Activated CD4-positive, alpha-beta memory T cell treated with anti-CD3 and anti-CD28 coated beads for 36 hours (primary cell): ENCODE measurements at regions of chr15 and their contacts with region 1.

Region 1: DNA sequence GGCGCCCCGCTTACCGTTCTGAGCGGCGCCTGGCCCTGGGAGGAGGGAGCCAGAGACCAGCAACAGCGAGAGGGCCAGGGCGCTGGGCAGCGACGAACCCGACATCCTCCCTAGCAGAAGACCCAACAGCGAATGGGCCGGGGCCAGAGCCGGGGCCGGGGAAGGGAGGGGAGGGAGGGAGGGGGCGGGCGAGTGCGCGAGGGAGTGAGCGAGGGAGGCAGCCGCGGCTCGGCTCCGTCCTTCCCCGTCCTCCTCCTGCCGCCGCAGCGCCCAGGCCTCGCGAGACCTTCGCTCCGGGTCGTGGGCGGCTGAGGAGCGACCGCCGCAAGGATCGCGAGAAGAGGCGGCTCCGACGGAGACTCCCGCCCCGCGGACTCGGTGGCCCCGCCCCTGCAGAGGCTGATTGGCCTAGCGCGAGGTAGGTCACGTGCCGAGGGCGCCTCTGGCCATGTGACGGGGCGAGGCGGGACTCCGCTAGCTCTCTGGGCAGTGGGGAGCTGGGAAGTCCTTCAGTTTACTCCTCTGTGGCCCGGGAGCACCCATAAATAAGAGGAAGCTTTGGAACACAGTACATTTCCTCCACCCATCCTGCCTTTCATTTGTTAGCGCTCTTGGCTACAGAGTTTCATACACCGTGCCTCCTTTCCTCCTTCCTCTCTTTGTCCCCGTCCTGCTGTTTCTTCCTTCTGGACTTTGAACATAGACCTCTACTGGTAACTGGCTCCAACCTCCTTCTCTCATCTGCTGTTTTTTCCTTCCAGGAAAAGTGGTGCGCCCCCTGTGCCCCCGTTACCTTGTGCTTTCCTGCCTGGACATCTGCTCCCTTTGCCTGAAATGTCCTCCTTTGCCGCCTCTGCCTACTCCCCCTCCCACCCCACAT is at the start of gene NPTN:
- DNase-seq: peak; percentile 99
- H3K4me3 Mint-ChIP-seq: peak within 1 kb of the TSS; percentile 83
- H3K27ac Mint-ChIP-seq: peak within 1 kb of the TSS; percentile 52
- H3K4me1 Mint-ChIP-seq: peaks cover 47% of the 10 kb centered on the region
- H3K27me3 Mint-ChIP-seq: peaks cover 10% of the 10 kb centered on the region
- total RNA-seq, gene NPTN: 46.7 to 49.8 TPM

Region 2: DNA sequence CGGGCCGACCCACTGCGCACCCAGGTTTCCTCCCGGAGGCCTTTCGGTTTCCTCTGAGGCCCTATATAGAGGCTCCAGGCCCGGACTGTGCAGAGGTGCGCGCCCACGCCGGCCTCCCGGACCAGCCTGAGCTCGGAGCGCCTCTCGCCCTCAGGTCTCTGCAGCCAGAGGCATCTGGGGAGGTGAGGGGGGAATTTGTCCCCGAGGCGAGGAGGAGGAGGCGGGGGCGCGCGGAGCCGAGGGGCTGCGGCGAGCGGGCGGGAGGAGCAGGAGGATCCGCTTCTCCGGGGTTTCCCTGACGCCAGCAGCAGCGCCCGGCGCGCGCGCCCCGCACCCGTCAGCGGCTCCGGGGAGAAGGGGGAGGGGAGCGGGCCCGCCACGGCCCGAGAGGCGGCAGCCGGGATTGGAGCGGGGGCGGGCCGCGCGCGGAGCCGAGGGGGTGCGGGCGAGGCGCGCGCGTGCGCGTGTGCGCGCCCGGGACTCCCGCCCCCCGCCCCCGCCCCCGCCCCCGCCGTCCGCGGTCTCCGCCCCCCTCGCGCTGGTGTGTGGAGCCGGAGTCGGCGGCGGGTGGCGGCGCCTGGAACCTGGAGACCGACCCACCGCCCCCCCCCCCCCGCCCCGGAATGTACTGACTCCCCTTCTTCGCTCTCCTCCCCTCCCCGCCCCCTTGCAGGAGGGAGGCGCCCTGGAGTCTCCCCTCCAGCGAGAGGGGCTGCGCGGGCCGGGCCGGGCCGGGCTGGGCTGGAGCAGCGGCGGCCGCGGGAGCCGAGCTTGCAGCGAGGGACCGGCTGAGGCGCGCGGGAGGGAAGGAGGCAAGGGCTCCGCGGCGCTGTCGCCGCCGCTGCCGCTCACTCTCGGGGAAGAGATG is 581.3 kb before region 1 on chr15 and contains the start of gene NEO1:
- CTCF ChIA-PET with region 1: interaction called, 3 read pairs
- POLR2A ChIA-PET with region 1: no interaction called
- intact Hi-C with region 1: loop called (anchors 10 kb)
- DNase-seq: peak; percentile 84
- H3K4me3 Mint-ChIP-seq: peak within 1 kb of the TSS; percentile 78
- H3K27ac Mint-ChIP-seq: no peak within 1 kb of the TSS
- H3K4me1 Mint-ChIP-seq: peaks cover 7% of the 10 kb centered on the region
- H3K27me3 Mint-ChIP-seq: peaks cover 7% of the 10 kb centered on the region
- total RNA-seq, gene NEO1: 8.3 to 9.3 TPM

Region 3: GRCh38 chr15:73560501-73561117 is 72.7 kb before region 1 on chr15:
- CTCF ChIA-PET with region 1: interaction called, 125 read pairs
- POLR2A ChIA-PET with region 1: interaction called, 4 read pairs
- intact Hi-C with region 1: loop called (anchors 1 kb)
- DNase-seq: no peak
- H3K4me3 Mint-ChIP-seq: no peak overlapping the region
- H3K27ac Mint-ChIP-seq: no peak overlapping the region
- H3K4me1 Mint-ChIP-seq: no peaks in the 10 kb centered on the region
- H3K27me3 Mint-ChIP-seq: no peaks in the 10 kb centered on the region

Region 4: GRCh38 chr15:73608941-73609340 is 24.4 kb before region 1 on chr15:
- CTCF ChIA-PET with region 1: interaction called, 104 read pairs
- POLR2A ChIA-PET with region 1: interaction called, 6 read pairs
- intact Hi-C with region 1: no loop called
- DNase-seq: no peak
- H3K4me3 Mint-ChIP-seq: no peak overlapping the region
- H3K27ac Mint-ChIP-seq: no peak overlapping the region
- H3K4me1 Mint-ChIP-seq: peaks cover 46% of the 10 kb centered on the region
- H3K27me3 Mint-ChIP-seq: no peaks in the 10 kb centered on the region

Region 5: DNA sequence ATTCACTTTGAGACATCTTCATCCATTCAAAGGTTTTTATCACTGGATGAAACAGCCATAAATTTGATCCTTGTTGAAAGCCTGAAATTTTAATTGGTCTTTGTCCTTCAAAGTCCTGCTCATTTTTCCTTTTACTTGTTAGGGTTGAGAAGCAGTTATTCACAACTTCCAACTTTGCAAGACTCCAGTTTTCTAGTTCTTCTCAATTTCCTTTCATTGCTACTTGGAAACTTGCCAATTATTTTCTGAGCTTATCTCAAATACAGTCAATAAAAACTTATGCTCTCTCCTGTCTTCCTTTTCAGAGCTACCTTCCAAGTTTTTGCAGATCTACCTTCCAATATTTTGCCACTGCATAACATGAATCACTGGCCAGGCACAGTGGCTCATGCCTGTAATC is 27.1 kb after region 1 on chr15:
- CTCF ChIA-PET with region 1: interaction called, 18 read pairs
- POLR2A ChIA-PET with region 1: no interaction called
- intact Hi-C with region 1: no loop called
- DNase-seq: no peak
- H3K4me3 Mint-ChIP-seq: no peak overlapping the region
- H3K27ac Mint-ChIP-seq: no peak overlapping the region
- H3K4me1 Mint-ChIP-seq: peaks cover 3% of the 10 kb centered on the region
- H3K27me3 Mint-ChIP-seq: peaks cover 18% of the 10 kb centered on the region

Region 6: GRCh38 chr15:73697033-73697467 is 63.7 kb after region 1 on chr15:
- CTCF ChIA-PET with region 1: interaction called, 437 read pairs
- POLR2A ChIA-PET with region 1: interaction called, 4 read pairs
- intact Hi-C with region 1: loop called (anchors 1 kb)
- DNase-seq: peak; percentile 92
- H3K4me3 Mint-ChIP-seq: peak overlapping the region; percentile 30
- H3K27ac Mint-ChIP-seq: peak overlapping the region; percentile 36
- H3K4me1 Mint-ChIP-seq: peaks cover 31% of the 10 kb centered on the region
- H3K27me3 Mint-ChIP-seq: peaks cover 53% of the 10 kb centered on the region